CD4-positive, alpha-beta memory T cell (primary cell): ENCODE measurements at regions of chr9 and their contacts with region 1.

Region 1: GRCh38 chr9:30140407-30140806 is 2244.0 kb upstream of the ACO1 start:
- DNase-seq: no peak
- H3K4me3 ChIP-seq: no peak overlapping the region
- H3K4me3 Mint-ChIP-seq: no peak overlapping the region
- H3K27ac ChIP-seq: no peak overlapping the region
- H3K27ac Mint-ChIP-seq: no peak overlapping the region
- H3K4me1 ChIP-seq: no peaks in the 10 kb centered on the region
- H3K4me1 Mint-ChIP-seq: no peaks in the 10 kb centered on the region
- H3K27me3 ChIP-seq: no peaks in the 10 kb centered on the region
- H3K27me3 Mint-ChIP-seq: no peaks in the 10 kb centered on the region

Region 2: GRCh38 chr9:28616310-28616709 is 1524.1 kb before region 1 on chr9:
- CTCF ChIA-PET with region 1: no interaction called
- POLR2A ChIA-PET with region 1: no interaction called
- intact Hi-C with region 1: loop called (anchors 5 kb)
- DNase-seq: no peak
- H3K4me3 ChIP-seq: no peak overlapping the region
- H3K4me3 Mint-ChIP-seq: no peak overlapping the region
- H3K27ac ChIP-seq: no peak overlapping the region
- H3K27ac Mint-ChIP-seq: no peak overlapping the region
- H3K4me1 ChIP-seq: no peaks in the 10 kb centered on the region
- H3K4me1 Mint-ChIP-seq: no peaks in the 10 kb centered on the region
- H3K27me3 ChIP-seq: no peaks in the 10 kb centered on the region
- H3K27me3 Mint-ChIP-seq: no peaks in the 10 kb centered on the region

Region 3: GRCh38 chr9:30065883-30066282 is 74.5 kb before region 1 on chr9:
- CTCF ChIA-PET with region 1: no interaction called
- POLR2A ChIA-PET with region 1: no interaction called
- intact Hi-C with region 1: no loop called
- DNase-seq: no peak
- H3K4me3 ChIP-seq: no peak overlapping the region
- H3K4me3 Mint-ChIP-seq: no peak overlapping the region
- H3K27ac ChIP-seq: no peak overlapping the region
- H3K27ac Mint-ChIP-seq: no peak overlapping the region
- H3K4me1 ChIP-seq: no peaks in the 10 kb centered on the region
- H3K4me1 Mint-ChIP-seq: no peaks in the 10 kb centered on the region
- H3K27me3 ChIP-seq: no peaks in the 10 kb centered on the region
- H3K27me3 Mint-ChIP-seq: no peaks in the 10 kb centered on the region

Region 4: GRCh38 chr9:30160570-30160969 is 20.2 kb after region 1 on chr9:
- CTCF ChIA-PET with region 1: no interaction called
- POLR2A ChIA-PET with region 1: no interaction called
- intact Hi-C with region 1: no loop called
- DNase-seq: no peak
- H3K4me3 ChIP-seq: no peak overlapping the region
- H3K4me3 Mint-ChIP-seq: no peak overlapping the region
- H3K27ac ChIP-seq: no peak overlapping the region
- H3K27ac Mint-ChIP-seq: no peak overlapping the region
- H3K4me1 ChIP-seq: no peaks in the 10 kb centered on the region
- H3K4me1 Mint-ChIP-seq: no peaks in the 10 kb centered on the region
- H3K27me3 ChIP-seq: no peaks in the 10 kb centered on the region
- H3K27me3 Mint-ChIP-seq: no peaks in the 10 kb centered on the region